Naive thymus-derived CD4-positive, alpha-beta T cell (primary cell): ENCODE measurements at regions of chr16 and their contacts with region 1.

Region 1: GRCh38 chr16:35485915-35486314 is 2026.5 kb downstream of the TP53TG3F start:
- DNase-seq: no peak
- ATAC-seq: no peak
- H3K4me3 ChIP-seq: no peak overlapping the region
- H3K4me3 Mint-ChIP-seq: no peak overlapping the region
- H3K27ac ChIP-seq: no peak overlapping the region
- H3K27ac Mint-ChIP-seq: no peak overlapping the region
- H3K4me1 ChIP-seq: no peaks in the 10 kb centered on the region
- H3K4me1 Mint-ChIP-seq: no peaks in the 10 kb centered on the region
- H3K27me3 ChIP-seq: no peaks in the 10 kb centered on the region
- H3K27me3 Mint-ChIP-seq: no peaks in the 10 kb centered on the region

Region 2: GRCh38 chr16:35449663-35450062 is 36.3 kb before region 1 on chr16:
- CTCF ChIA-PET with region 1: no interaction called
- POLR2A ChIA-PET with region 1: no interaction called
- intact Hi-C with region 1: no loop called
- DNase-seq: no peak
- ATAC-seq: no peak
- H3K4me3 ChIP-seq: no peak overlapping the region
- H3K4me3 Mint-ChIP-seq: no peak overlapping the region
- H3K27ac ChIP-seq: no peak overlapping the region
- H3K27ac Mint-ChIP-seq: no peak overlapping the region
- H3K4me1 ChIP-seq: no peaks in the 10 kb centered on the region
- H3K4me1 Mint-ChIP-seq: no peaks in the 10 kb centered on the region
- H3K27me3 ChIP-seq: no peaks in the 10 kb centered on the region
- H3K27me3 Mint-ChIP-seq: no peaks in the 10 kb centered on the region

Region 3: GRCh38 chr16:35533683-35534082 is 47.8 kb after region 1 on chr16:
- CTCF ChIA-PET with region 1: no interaction called
- POLR2A ChIA-PET with region 1: no interaction called
- intact Hi-C with region 1: loop called in 1 of 2 experiments (anchors 10 kb)
- DNase-seq: no peak
- ATAC-seq: no peak
- H3K4me3 ChIP-seq: no peak overlapping the region
- H3K4me3 Mint-ChIP-seq: no peak overlapping the region
- H3K27ac ChIP-seq: no peak overlapping the region
- H3K27ac Mint-ChIP-seq: no peak overlapping the region
- H3K4me1 ChIP-seq: no peaks in the 10 kb centered on the region
- H3K4me1 Mint-ChIP-seq: no peaks in the 10 kb centered on the region
- H3K27me3 ChIP-seq: no peaks in the 10 kb centered on the region
- H3K27me3 Mint-ChIP-seq: no peaks in the 10 kb centered on the region